Left ventricle myocardium inferior (tissue), 1 donor: ENCODE measurements at regions of chr2 and their contacts with region 1.

Region 1: DNA sequence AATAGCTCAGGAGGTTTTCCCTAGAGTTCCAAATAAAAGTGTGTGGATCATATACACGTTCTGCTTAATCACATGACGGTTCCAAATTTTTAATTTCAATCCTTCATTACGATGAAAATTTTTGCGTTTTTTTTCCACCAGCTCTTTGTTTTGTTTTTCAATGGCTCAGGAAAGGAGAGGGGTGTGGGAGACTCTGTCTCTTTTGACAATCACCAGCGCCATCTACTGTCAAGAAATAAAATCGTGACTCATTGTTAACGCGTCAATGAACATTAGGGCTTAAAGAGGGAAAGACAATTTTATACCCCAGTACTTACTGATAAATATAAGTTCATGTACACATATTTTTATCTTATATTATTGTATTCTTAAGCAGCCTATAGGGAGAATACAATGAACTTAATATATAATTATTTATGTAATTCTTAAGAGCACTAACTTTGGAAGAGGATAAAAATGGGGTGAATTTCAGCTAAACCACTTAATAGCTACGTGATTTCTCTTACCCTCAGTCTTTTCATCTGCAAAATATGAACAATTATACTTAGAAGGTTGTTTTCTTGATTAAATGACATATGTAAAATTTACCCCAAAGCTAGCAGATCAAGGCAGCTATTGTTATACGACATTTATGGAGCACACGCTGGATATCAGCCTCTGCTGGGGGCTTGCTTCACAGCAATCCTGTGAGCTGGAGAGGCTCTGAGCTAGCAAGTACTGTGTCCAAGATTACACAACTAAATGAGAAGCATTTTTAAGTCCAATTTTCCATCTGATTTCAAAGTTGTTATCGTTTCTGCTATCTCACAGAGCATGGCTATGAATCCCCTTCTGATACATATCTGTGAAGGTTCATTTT is 47.4 kb upstream of the RMDN2 start:
- DNase-seq: no peak
- H3K4me3 ChIP-seq: no peak overlapping the region
- H3K27ac ChIP-seq: no peak overlapping the region
- H3K4me1 ChIP-seq: peaks cover 44% of the 10 kb centered on the region
- H3K27me3 ChIP-seq: no peaks in the 10 kb centered on the region
- CTCF ChIP-seq: peak; percentile 83

Region 2: GRCh38 chr2:37414470-37414949 is 463.2 kb before region 1 on chr2:
- intact Hi-C with region 1: loop called (anchors 5 kb)
- DNase-seq: no peak
- H3K4me3 ChIP-seq: peak overlapping the region; percentile 24
- H3K27ac ChIP-seq: peak overlapping the region; percentile 50
- H3K4me1 ChIP-seq: peaks cover 10% of the 10 kb centered on the region
- H3K27me3 ChIP-seq: no peaks in the 10 kb centered on the region
- CTCF ChIP-seq: peak; percentile 84

Region 3: DNA sequence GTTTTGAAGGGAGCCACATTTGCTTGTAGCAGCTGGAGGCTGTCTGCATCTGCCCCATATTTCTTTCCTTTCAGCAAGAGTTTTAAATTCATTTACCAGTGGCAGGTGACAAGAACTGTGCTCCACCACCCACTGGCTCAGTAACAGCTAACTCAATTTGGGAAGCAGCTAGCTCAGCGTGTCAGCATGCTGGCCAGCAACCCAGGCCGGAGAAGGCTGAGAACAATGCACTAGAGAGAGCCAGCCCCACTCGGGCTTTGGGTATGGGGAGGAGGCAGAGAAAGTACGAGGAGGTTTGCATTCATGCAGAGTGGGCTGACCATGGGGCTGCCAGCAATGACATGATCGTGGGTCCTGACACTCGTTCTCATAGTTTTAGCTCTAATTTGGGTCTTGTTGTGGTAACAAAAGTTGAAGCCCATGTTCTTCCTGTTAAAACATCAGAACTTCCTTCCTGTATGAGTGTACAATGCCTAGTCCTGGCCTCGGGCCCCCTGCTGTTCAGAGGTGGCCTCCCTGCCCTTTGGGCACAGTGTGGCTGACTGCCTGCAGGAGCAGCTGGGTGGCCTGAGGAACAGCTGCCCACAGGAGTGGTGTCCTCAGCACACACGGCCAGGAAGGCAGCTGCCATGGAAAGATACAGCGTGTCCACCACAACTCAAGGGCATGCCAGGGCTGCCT is 229.2 kb before region 1 on chr2:
- intact Hi-C with region 1: loop called (anchors 5 kb)
- DNase-seq: peak; percentile 71
- H3K4me3 ChIP-seq: peak overlapping the region; percentile 11
- H3K27ac ChIP-seq: peak overlapping the region; percentile 98
- H3K4me1 ChIP-seq: peaks cover 100% of the 10 kb centered on the region
- H3K27me3 ChIP-seq: no peaks in the 10 kb centered on the region
- CTCF ChIP-seq: peak; percentile 50